ENCODE measurements at regions of chr2 and their contacts with region 1.

Region 1: GRCh38 chr2:19863303-19864041 is 38.3 kb downstream of the TTC32 start:
- DNase-seq: peak; percentile 92

Region 2: GRCh38 chr2:18387441-18388206 is 1475.8 kb before region 1 on chr2:
- intact Hi-C with region 1: loop called (anchors 10 kb)
- DNase-seq: peak; percentile 81

Region 3: GRCh38 chr2:18520451-18521425 is 1342.7 kb before region 1 on chr2:
- intact Hi-C with region 1: loop called (anchors 2 kb)
- DNase-seq: peak; percentile 91

Region 4: DNA sequence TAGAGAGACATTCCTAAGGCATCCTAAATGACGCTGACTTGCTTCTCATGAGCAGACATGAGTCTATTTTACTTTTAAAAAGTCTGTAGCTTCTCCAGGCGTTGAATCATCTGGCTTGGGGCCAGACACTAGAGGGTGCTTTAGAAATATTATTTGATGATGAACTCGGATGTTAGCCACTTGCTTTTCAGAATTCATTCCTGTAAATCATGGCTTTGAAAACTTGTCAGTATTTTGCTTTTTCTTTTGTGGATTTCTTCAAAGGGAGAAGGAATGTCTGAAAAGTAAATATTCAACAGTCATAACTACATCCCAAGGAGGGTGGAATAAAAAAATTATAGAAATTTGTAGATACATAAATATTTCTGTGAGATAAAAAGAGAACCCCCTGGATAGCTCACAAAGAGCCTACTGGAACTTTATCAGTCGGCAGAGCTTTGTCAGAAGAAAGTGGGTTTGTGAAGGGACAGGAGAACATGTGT is 875.8 kb before region 1 on chr2:
- intact Hi-C with region 1: loop called (anchors 10 kb)
- DNase-seq: no peak

Region 5: GRCh38 chr2:19774805-19775176 is 88.7 kb before region 1 on chr2:
- intact Hi-C with region 1: loop called (anchors 5 kb)
- DNase-seq: no peak

Measured in cardiac septum (tissue), 1 donor.